HCT116 (cell line): ENCODE measurements at regions of chrX and their contacts with region 1.

Region 1: DNA sequence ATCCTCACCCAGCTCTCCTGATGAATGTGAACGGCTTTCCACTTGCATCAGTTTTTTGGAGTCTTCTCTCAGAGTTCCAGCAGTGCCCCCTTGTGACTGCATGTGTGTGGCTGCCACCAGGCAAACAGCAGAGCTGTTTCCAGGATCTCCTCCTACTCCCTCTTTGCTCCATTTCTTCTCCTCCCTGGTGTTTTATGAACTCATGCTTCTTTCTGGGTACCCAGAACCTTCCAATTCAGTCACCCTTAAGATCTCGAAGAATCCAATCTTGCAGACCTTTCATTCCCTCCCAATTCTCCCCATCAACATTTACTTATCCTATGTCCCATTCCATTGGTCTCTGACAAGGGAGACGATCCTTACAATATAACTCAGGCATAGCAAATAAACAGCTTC is 6.8 kb upstream of the TCEANC start:
- DNase-seq: peak; percentile 24
- ATAC-seq: peak; percentile 81
- H3K4me3 ChIP-seq: no peak overlapping the region
- H3K27ac ChIP-seq: no peak overlapping the region
- H3K4me1 ChIP-seq: peaks cover 7 to 13% of the 10 kb centered on the region in 2 experiments; a peak in 3 of 4 replicates
- H3K27me3 ChIP-seq: no peaks in the 10 kb centered on the region
- CTCF ChIP-seq: peak; percentile 54 to 67 (median 65)
- POLR2A ChIP-seq: no peak
- RAD21 ChIP-seq: peak; percentile 72

Region 2: GRCh38 chrX:12946838-12947544 is 699.2 kb before region 1 on chrX:
- CTCF ChIA-PET with region 1: interaction called, 4 read pairs
- POLR2A ChIA-PET with region 1: no interaction called
- RAD21 ChIA-PET with region 1: no interaction called
- intact Hi-C with region 1: loop called (anchors 10 kb)
- DNase-seq: peak; percentile 60
- ATAC-seq: peak; percentile 78
- H3K4me3 ChIP-seq: no peak overlapping the region
- H3K27ac ChIP-seq: peak overlapping the region; percentile 37
- H3K4me1 ChIP-seq: peaks cover 9 to 11% of the 10 kb centered on the region in 2 experiments; a peak in 3 of 4 replicates
- H3K27me3 ChIP-seq: no peaks in the 10 kb centered on the region
- CTCF ChIP-seq: peak; percentile 90 to 99 (median 94)
- POLR2A ChIP-seq: no peak
- RAD21 ChIP-seq: peak; percentile 87

Region 3: DNA sequence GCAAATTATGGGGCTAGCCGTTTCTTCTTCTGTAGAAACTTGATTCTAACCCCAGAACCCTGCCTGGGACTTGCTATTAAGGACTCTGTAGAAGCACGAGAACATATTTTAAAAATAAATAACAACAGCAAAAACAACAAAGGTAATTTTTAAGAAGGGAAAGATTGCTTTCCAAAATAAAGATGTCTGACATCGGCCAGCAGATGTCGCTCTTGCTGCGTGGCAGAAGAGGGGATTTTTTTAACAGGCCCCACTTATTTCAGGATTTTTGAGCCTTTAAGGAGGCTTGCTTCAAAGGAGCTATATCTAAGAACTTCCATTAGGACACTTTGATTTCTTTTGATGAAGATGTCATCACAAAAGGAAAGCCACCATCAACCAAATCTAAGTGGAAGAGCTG is 139.6 kb before region 1 on chrX:
- CTCF ChIA-PET with region 1: interaction called, 43 read pairs
- POLR2A ChIA-PET with region 1: interaction called, 3 read pairs
- RAD21 ChIA-PET with region 1: interaction called, 3 to 5 read pairs
- intact Hi-C with region 1: loop called (anchors 1 kb)
- DNase-seq: peak; percentile 28
- ATAC-seq: no peak
- H3K4me3 ChIP-seq: no peak overlapping the region
- H3K27ac ChIP-seq: no peak overlapping the region
- H3K4me1 ChIP-seq: no peaks in the 10 kb centered on the region
- H3K27me3 ChIP-seq: no peaks in the 10 kb centered on the region
- CTCF ChIP-seq: peak; percentile 51 to 67 (median 65); a peak in 5 of 6 replicates
- POLR2A ChIP-seq: no peak
- RAD21 ChIP-seq: peak; percentile 84

Region 4: GRCh38 chrX:14825851-14826250 is 1179.7 kb after region 1 on chrX:
- CTCF ChIA-PET with region 1: no interaction called
- POLR2A ChIA-PET with region 1: no interaction called
- RAD21 ChIA-PET with region 1: no interaction called
- intact Hi-C with region 1: no loop called
- DNase-seq: no peak
- ATAC-seq: no peak
- H3K4me3 ChIP-seq: no peak overlapping the region
- H3K27ac ChIP-seq: no peak overlapping the region
- H3K4me1 ChIP-seq: no peaks in the 10 kb centered on the region
- H3K27me3 ChIP-seq: no peaks in the 10 kb centered on the region
- CTCF ChIP-seq: no peak
- POLR2A ChIP-seq: no peak
- RAD21 ChIP-seq: no peak